Activated B cell treated with CpG ODN at 0.5 μM for 24 hours (primary cell): ENCODE measurements at regions of chr1 and their contacts with region 1.

Region 1: GRCh38 chr1:24415334-24415909 is at the start of gene NIPAL3:
- DNase-seq: peak; percentile 86
- ATAC-seq: peak; percentile 92
- H3K4me3 Mint-ChIP-seq: peak within 1 kb of the TSS; percentile 98
- H3K27ac Mint-ChIP-seq: peak within 1 kb of the TSS; percentile 80
- H3K4me1 Mint-ChIP-seq: peaks cover 53% of the 10 kb centered on the region
- H3K27me3 Mint-ChIP-seq: no peaks in the 10 kb centered on the region
- CTCF ChIP-seq: peak; percentile 85
- total RNA-seq, gene NIPAL3: 21.0 and 23.2 TPM in 2 replicates

Region 2: DNA sequence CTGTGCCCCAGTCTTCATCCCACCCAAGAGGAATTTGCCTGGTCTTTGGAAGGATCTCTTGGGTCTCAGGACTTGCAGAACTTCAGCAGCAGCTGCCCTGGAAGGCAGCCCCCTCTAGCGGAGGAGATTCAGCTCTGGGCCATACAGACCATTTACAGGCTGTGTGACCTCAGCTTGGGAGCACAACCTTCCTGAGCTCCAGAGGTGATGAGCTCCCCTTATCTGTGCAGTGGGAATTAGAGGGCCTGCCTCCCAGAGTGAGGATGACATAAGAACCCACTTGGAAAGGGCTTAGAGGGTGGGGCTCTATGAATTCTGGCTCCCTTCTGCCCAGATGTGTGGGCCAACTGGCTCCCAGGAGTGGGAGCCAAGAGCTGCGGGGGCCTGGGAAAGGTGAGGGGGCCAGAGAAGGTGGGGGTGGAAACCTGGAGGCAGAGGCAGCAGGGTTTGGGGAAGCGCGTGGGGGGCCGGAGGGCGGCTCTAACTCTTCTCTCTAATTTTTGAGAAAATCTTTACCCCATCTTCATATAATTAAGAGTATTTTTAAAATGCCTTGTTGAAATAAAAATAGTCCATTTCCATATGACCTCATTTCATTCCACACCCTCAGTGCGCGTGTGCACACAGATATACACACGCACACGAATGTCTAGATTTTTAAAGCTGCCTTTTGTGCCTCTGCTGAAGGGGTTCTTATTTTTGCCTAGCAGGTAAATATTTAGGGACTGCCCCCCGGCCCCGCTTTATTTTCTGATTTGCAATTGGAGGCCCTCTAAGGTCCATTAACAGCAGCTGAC is 1683.3 kb before region 1 on chr1:
- CTCF ChIA-PET with region 1: no interaction called
- POLR2A ChIA-PET with region 1: no interaction called
- intact Hi-C with region 1: no loop called
- DNase-seq: no peak
- ATAC-seq: no peak
- H3K4me3 Mint-ChIP-seq: no peak overlapping the region
- H3K27ac Mint-ChIP-seq: no peak overlapping the region
- H3K4me1 Mint-ChIP-seq: no peaks in the 10 kb centered on the region
- H3K27me3 Mint-ChIP-seq: no peaks in the 10 kb centered on the region
- CTCF ChIP-seq: no peak

Region 3: GRCh38 chr1:24201941-24202440 is 213.4 kb before region 1 on chr1:
- CTCF ChIA-PET with region 1: interaction called, 10 read pairs
- POLR2A ChIA-PET with region 1: interaction called, 3 read pairs
- intact Hi-C with region 1: no loop called
- DNase-seq: no peak
- ATAC-seq: peak; percentile 48
- H3K4me3 Mint-ChIP-seq: no peak overlapping the region
- H3K27ac Mint-ChIP-seq: no peak overlapping the region
- H3K4me1 Mint-ChIP-seq: peaks cover 35% of the 10 kb centered on the region
- H3K27me3 Mint-ChIP-seq: no peaks in the 10 kb centered on the region
- CTCF ChIP-seq: no peak

Region 4: GRCh38 chr1:24379733-24380315 is 35.6 kb before region 1 on chr1:
- CTCF ChIA-PET with region 1: no interaction called
- POLR2A ChIA-PET with region 1: no interaction called
- intact Hi-C with region 1: no loop called
- DNase-seq: no peak
- ATAC-seq: no peak
- H3K4me3 Mint-ChIP-seq: no peak overlapping the region
- H3K27ac Mint-ChIP-seq: no peak overlapping the region
- H3K4me1 Mint-ChIP-seq: peaks cover 12% of the 10 kb centered on the region
- H3K27me3 Mint-ChIP-seq: no peaks in the 10 kb centered on the region
- CTCF ChIP-seq: no peak

Region 5: GRCh38 chr1:24481101-24481500 is 65.7 kb after region 1 on chr1:
- CTCF ChIA-PET with region 1: interaction called, 3 read pairs
- POLR2A ChIA-PET with region 1: interaction called, 8 read pairs
- intact Hi-C with region 1: loop called (anchors 5 kb)
- DNase-seq: peak; percentile 29
- ATAC-seq: peak; percentile 94
- H3K4me3 Mint-ChIP-seq: peak overlapping the region; percentile 58
- H3K27ac Mint-ChIP-seq: peak overlapping the region; percentile 91
- H3K4me1 Mint-ChIP-seq: peaks cover 36% of the 10 kb centered on the region
- H3K27me3 Mint-ChIP-seq: no peaks in the 10 kb centered on the region
- CTCF ChIP-seq: no peak

Region 6: DNA sequence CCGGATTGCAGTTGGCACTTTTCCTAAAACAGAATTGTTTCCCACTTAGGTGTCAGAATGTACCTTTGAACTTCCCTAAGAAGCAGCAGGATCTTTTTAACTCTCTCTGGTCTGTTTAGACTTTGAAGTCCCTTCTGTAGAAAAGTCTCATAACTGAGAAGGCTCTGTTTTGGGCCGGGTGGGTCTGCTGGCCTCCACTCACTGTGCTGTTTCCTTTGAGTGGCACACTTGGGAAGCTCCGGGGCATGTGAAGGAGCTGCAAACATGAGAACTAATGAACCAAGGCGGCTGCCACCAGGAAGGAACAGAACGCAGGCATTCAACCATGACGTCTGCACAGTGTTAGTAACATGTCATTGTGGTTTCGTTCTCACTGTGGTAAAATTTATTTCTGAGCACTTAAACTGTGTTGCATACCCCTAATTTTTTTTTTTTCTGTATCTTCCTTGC is 121.0 kb after region 1 on chr1:
- CTCF ChIA-PET with region 1: interaction called, 12 read pairs
- POLR2A ChIA-PET with region 1: interaction called, 10 read pairs
- intact Hi-C with region 1: loop called (anchors 1 kb)
- DNase-seq: peak; percentile 51
- ATAC-seq: peak; percentile 73
- H3K4me3 Mint-ChIP-seq: peak overlapping the region; percentile 81
- H3K27ac Mint-ChIP-seq: peak overlapping the region; percentile 99
- H3K4me1 Mint-ChIP-seq: peaks cover 74% of the 10 kb centered on the region
- H3K27me3 Mint-ChIP-seq: no peaks in the 10 kb centered on the region
- CTCF ChIP-seq: no peak

Region 7: GRCh38 chr1:24642481-24643361 is 227.3 kb after region 1 on chr1 and contains the start of gene SRRM1:
- CTCF ChIA-PET with region 1: interaction called, 7 read pairs
- POLR2A ChIA-PET with region 1: interaction called, 11 read pairs
- intact Hi-C with region 1: loop called (anchors 1 kb)
- DNase-seq: peak; percentile 96
- ATAC-seq: peak; percentile 90
- H3K4me3 Mint-ChIP-seq: peak within 1 kb of the TSS; percentile 96
- H3K27ac Mint-ChIP-seq: peak within 1 kb of the TSS; percentile 99
- H3K4me1 Mint-ChIP-seq: peaks cover 38% of the 10 kb centered on the region
- H3K27me3 Mint-ChIP-seq: no peaks in the 10 kb centered on the region
- CTCF ChIP-seq: no peak
- total RNA-seq, gene SRRM1: 214 and 220 TPM in 2 replicates

Region 8: GRCh38 chr1:25239681-25240541 is 824.5 kb after region 1 on chr1:
- CTCF ChIA-PET with region 1: no interaction called
- POLR2A ChIA-PET with region 1: no interaction called
- intact Hi-C with region 1: loop called (anchors 10 kb)
- DNase-seq: peak; percentile 79
- ATAC-seq: peak; percentile 87
- H3K4me3 Mint-ChIP-seq: peak overlapping the region; percentile 96
- H3K27ac Mint-ChIP-seq: peak overlapping the region; percentile 97
- H3K4me1 Mint-ChIP-seq: peaks cover 66% of the 10 kb centered on the region
- H3K27me3 Mint-ChIP-seq: no peaks in the 10 kb centered on the region
- CTCF ChIP-seq: no peak